Aorta (tissue), 5 donors: ENCODE measurements at regions of chr4 and their contacts with region 1.

Region 1: GRCh38 chr4:185640811-185641675 is 105.7 kb upstream of the PDLIM3 start:
- DNase-seq: no peak
- ATAC-seq: no peak
- H3K4me3 ChIP-seq: no peak overlapping the region
- H3K27ac ChIP-seq: peak overlapping the region in 1 of 2 donors; percentile 18
- H3K4me1 ChIP-seq: no peaks in the 10 kb centered on the region
- H3K27me3 ChIP-seq: no peaks in the 10 kb centered on the region

Region 2: GRCh38 chr4:185554365-185555126 is 86.5 kb before region 1 on chr4:
- intact Hi-C with region 1: no loop called
- DNase-seq: no peak
- ATAC-seq: peak; percentile 91
- H3K4me3 ChIP-seq: no peak overlapping the region
- H3K27ac ChIP-seq: peak overlapping the region in 1 of 2 donors; percentile 74
- H3K4me1 ChIP-seq: peaks cover 3 to 4% of the 10 kb centered on the region in 2 donors
- H3K27me3 ChIP-seq: no peaks in the 10 kb centered on the region

Region 3: GRCh38 chr4:186021461-186022167 is 380.6 kb after region 1 on chr4:
- intact Hi-C with region 1: loop called (anchors 2 to 5 kb)
- DNase-seq: no peak
- ATAC-seq: peak; percentile 75
- H3K4me3 ChIP-seq: peak overlapping the region in 1 of 2 donors; percentile 35
- H3K27ac ChIP-seq: no peak overlapping the region
- H3K4me1 ChIP-seq: peaks cover 0 to 3% of the 10 kb centered on the region in 2 donors
- H3K27me3 ChIP-seq: no peaks in the 10 kb centered on the region

Region 4: GRCh38 chr4:186037692-186038658 is 396.9 kb after region 1 on chr4:
- intact Hi-C with region 1: loop called in 1 of 2 experiments (anchors 5 kb)
- DNase-seq: no peak
- ATAC-seq: peak; percentile 95
- H3K4me3 ChIP-seq: no peak overlapping the region
- H3K27ac ChIP-seq: no peak overlapping the region
- H3K4me1 ChIP-seq: peaks cover 0 to 1% of the 10 kb centered on the region in 2 donors
- H3K27me3 ChIP-seq: no peaks in the 10 kb centered on the region